ENCODE measurements at regions of chr6 and their contacts with region 1.

Region 1: DNA sequence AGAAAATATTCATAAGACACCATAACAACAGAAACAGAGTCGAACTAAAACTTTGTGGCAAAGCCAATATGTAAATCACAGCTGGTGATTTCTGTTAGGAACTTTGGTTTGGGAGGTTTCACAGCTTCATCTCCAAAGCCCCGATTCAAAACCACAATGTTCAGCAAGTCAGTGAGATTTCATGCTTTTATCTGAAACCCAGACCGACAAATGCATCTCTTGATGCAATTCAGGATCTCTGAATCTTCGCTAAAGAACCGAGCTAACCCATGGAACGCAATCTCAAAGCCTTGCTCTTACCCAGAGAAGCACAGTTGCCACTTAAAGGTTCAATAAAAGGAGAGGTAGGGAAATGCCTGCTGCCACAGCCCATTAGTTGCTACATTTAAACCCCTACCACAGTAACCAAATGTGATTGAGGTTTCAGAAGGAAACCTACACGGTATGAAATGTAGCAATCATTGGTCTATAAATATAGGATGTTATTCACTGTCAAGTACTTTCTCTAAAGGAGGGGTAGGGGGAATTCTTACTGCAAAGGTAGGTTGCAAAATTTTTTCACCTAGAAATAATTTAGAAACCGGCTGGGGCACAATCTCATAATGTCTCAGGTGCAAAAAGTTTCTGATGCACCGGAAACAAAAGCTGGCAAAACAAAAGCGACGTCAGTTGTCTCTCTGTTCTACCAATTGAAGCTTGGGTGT is 381.0 kb upstream of the ARID1B start:
- DNase-seq: peak in 7 of 9 donors; percentile 67 to 85 (median 77)
- ATAC-seq: peak; percentile 85
- H3K4me3 ChIP-seq: peak overlapping the region; percentile 14
- H3K4me3 Mint-ChIP-seq: peak overlapping the region; percentile 49 to 95 (median 84)
- H3K27ac ChIP-seq: peak overlapping the region; percentile 85
- H3K27ac Mint-ChIP-seq: peak overlapping the region; percentile 60 to 100 (median 99)
- H3K4me1 ChIP-seq: peaks cover 16 to 67% of the 10 kb centered on the region in 2 donors
- H3K4me1 Mint-ChIP-seq: peaks cover 17 to 99% (median 89%) of the 10 kb centered on the region in 7 donors
- H3K27me3 ChIP-seq: no peaks in the 10 kb centered on the region
- H3K27me3 Mint-ChIP-seq: peaks cover 0 to 40% (median 0%) of the 10 kb centered on the region in 5 donors

Region 2: GRCh38 chr6:155418017-155418761 is 978.0 kb before region 1 on chr6:
- CTCF ChIA-PET with region 1: no interaction called
- POLR2A ChIA-PET with region 1: no interaction called
- intact Hi-C with region 1: loop called in 1 of 2 experiments (anchors 5 kb)
- DNase-seq: peak; percentile 9 to 87 (median 68)
- ATAC-seq: peak; percentile 89
- H3K4me3 ChIP-seq: peak overlapping the region; percentile 44
- H3K4me3 Mint-ChIP-seq: peak overlapping the region; percentile 77 to 89 (median 84)
- H3K27ac ChIP-seq: peak overlapping the region; percentile 84
- H3K27ac Mint-ChIP-seq: peak overlapping the region; percentile 93 to 99 (median 97)
- H3K4me1 ChIP-seq: peaks cover 6 to 15% of the 10 kb centered on the region in 2 donors
- H3K4me1 Mint-ChIP-seq: peaks cover 22 to 50% (median 38%) of the 10 kb centered on the region in 7 donors
- H3K27me3 ChIP-seq: no peaks in the 10 kb centered on the region
- H3K27me3 Mint-ChIP-seq: no peaks in the 10 kb centered on the region

Region 3: GRCh38 chr6:156197513-156197912 is 198.7 kb before region 1 on chr6:
- CTCF ChIA-PET with region 1: no interaction called
- POLR2A ChIA-PET with region 1: interaction called, 5 read pairs
- intact Hi-C with region 1: loop called in 1 of 2 experiments (anchors 5 kb)
- DNase-seq: peak in 7 of 9 donors; percentile 19 to 66 (median 44)
- ATAC-seq: peak; percentile 67
- H3K4me3 ChIP-seq: no peak overlapping the region
- H3K4me3 Mint-ChIP-seq: peak overlapping the region in 9 of 10 donors; percentile 7 to 75 (median 62)
- H3K27ac ChIP-seq: peak overlapping the region; percentile 20
- H3K27ac Mint-ChIP-seq: peak overlapping the region in 8 of 9 donors; percentile 65 to 95 (median 84)
- H3K4me1 ChIP-seq: peaks cover 0 to 7% of the 10 kb centered on the region in 2 donors
- H3K4me1 Mint-ChIP-seq: peaks cover 7 to 58% (median 45%) of the 10 kb centered on the region in 7 donors
- H3K27me3 ChIP-seq: no peaks in the 10 kb centered on the region
- H3K27me3 Mint-ChIP-seq: peaks cover 0 to 9% (median 0%) of the 10 kb centered on the region in 5 donors

Region 4: DNA sequence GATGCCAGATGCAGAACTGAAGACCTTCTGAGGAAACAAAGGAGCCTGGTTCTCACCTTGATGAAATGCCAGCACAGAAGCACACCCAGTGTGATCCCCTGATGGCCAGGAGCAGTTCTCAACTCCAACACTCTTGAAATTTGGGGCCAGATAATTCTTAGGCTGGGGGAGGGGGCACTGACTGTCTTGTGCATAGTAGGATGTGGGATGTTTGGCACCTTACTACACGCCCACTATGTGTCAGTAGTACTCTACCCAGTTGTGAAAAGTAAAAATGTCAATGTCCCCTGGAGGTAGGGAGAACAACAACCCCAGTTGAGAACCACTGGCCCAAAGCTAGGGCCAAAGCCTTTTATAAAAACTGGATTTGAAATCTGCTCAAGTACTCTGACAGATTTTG is 17.4 kb before region 1 on chr6:
- CTCF ChIA-PET with region 1: interaction called, 8 read pairs
- POLR2A ChIA-PET with region 1: interaction called, 18 read pairs
- intact Hi-C with region 1: loop called in 1 of 2 experiments (anchors 1 kb)
- DNase-seq: peak in 6 of 9 donors; percentile 19 to 48 (median 36)
- ATAC-seq: peak; percentile 74
- H3K4me3 ChIP-seq: no peak overlapping the region
- H3K4me3 Mint-ChIP-seq: no peak overlapping the region
- H3K27ac ChIP-seq: no peak overlapping the region
- H3K27ac Mint-ChIP-seq: peak overlapping the region in 6 of 9 donors; percentile 8 to 67 (median 36)
- H3K4me1 ChIP-seq: no peaks in the 10 kb centered on the region
- H3K4me1 Mint-ChIP-seq: peaks cover 0 to 21% (median 0%) of the 10 kb centered on the region in 7 donors
- H3K27me3 ChIP-seq: no peaks in the 10 kb centered on the region
- H3K27me3 Mint-ChIP-seq: peaks cover 0 to 4% (median 0%) of the 10 kb centered on the region in 5 donors

Region 5: GRCh38 chr6:156564127-156564806 is 168.0 kb after region 1 on chr6:
- CTCF ChIA-PET with region 1: no interaction called
- POLR2A ChIA-PET with region 1: interaction called, 4 read pairs
- intact Hi-C with region 1: loop called in 1 of 2 experiments (anchors 1 kb)
- DNase-seq: peak; percentile 54 to 76 (median 65)
- ATAC-seq: peak; percentile 95
- H3K4me3 ChIP-seq: no peak overlapping the region
- H3K4me3 Mint-ChIP-seq: peak overlapping the region in 1 of 10 donors; percentile 34
- H3K27ac ChIP-seq: no peak overlapping the region
- H3K27ac Mint-ChIP-seq: peak overlapping the region in 4 of 9 donors; percentile 21 to 49 (median 32)
- H3K4me1 ChIP-seq: peaks cover 0 to 3% of the 10 kb centered on the region in 2 donors
- H3K4me1 Mint-ChIP-seq: peaks cover 5 to 13% (median 7%) of the 10 kb centered on the region in 7 donors
- H3K27me3 ChIP-seq: no peaks in the 10 kb centered on the region
- H3K27me3 Mint-ChIP-seq: peaks cover 0 to 11% (median 8%) of the 10 kb centered on the region in 5 donors

Region 6: GRCh38 chr6:157488716-157489118 is 1092.5 kb after region 1 on chr6:
- CTCF ChIA-PET with region 1: no interaction called
- POLR2A ChIA-PET with region 1: no interaction called
- intact Hi-C with region 1: no loop called
- DNase-seq: no peak
- ATAC-seq: no peak
- H3K4me3 ChIP-seq: no peak overlapping the region
- H3K4me3 Mint-ChIP-seq: no peak overlapping the region
- H3K27ac ChIP-seq: no peak overlapping the region
- H3K27ac Mint-ChIP-seq: no peak overlapping the region
- H3K4me1 ChIP-seq: peaks cover 14% of the 10 kb centered on the region in 2 donors
- H3K4me1 Mint-ChIP-seq: peaks cover 20 to 43% (median 24%) of the 10 kb centered on the region in 7 donors
- H3K27me3 ChIP-seq: no peaks in the 10 kb centered on the region
- H3K27me3 Mint-ChIP-seq: peaks cover 5 to 8% (median 7%) of the 10 kb centered on the region in 5 donors

Measured in naive thymus-derived CD4-positive, alpha-beta T cell (primary cell).